ENCODE measurements at regions of chr7 and their contacts with region 1.

Region 1: GRCh38 chr7:77989981-77990566 is 191.5 kb downstream of the PHTF2 start:
- DNase-seq: no peak
- ATAC-seq: no peak
- H3K4me3 ChIP-seq: no peak overlapping the region
- H3K27ac ChIP-seq: no peak overlapping the region
- H3K4me1 ChIP-seq: no peaks in the 10 kb centered on the region
- H3K27me3 ChIP-seq: peaks cover 0 to 2% of the 10 kb centered on the region in 2 experiments; a peak in 2 of 4 replicates
- CTCF ChIP-seq: peak; percentile 4 to 37 (median 21); a peak in 2 of 6 replicates
- EP300 ChIP-seq: no peak
- POLR2A ChIP-seq: no peak
- RAD21 ChIP-seq: 0 out of 2 replicates have a peak, but pooled peaks have one; percentile 2

Region 2: DNA sequence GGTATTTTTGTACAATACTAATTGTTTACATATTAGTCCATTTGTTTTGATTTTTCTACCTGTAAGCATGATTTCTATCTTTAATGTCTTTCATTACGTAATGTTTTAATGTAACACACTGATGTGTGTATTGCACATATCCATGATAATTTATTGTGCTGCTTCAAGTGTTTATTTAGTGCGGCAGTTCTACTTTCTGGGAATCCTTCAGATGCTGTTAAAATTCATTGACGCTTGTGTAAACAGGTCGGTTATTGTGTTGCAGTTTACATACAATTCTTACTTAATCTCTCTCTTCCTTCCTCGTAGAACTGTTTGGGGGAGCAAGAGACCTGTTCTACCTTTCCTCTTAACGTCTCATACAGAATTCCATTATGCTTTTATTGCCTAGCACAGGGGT is 198.7 kb before region 1 on chr7:
- CTCF ChIA-PET with region 1: no interaction called
- POLR2A ChIA-PET with region 1: no interaction called
- RAD21 ChIA-PET with region 1: no interaction called
- SMC1A ChIA-PET with region 1: no interaction called
- in situ Hi-C with region 1: no loop called
- intact Hi-C with region 1: no loop called
- DNase-seq: no peak
- ATAC-seq: no peak
- H3K4me3 ChIP-seq: no peak overlapping the region
- H3K27ac ChIP-seq: no peak overlapping the region
- H3K4me1 ChIP-seq: no peaks in the 10 kb centered on the region; the same call in 1 of the 2 replicates
- H3K27me3 ChIP-seq: no peaks in the 10 kb centered on the region
- CTCF ChIP-seq: no peak
- EP300 ChIP-seq: no peak
- POLR2A ChIP-seq: no peak
- RAD21 ChIP-seq: no peak

Region 3: DNA sequence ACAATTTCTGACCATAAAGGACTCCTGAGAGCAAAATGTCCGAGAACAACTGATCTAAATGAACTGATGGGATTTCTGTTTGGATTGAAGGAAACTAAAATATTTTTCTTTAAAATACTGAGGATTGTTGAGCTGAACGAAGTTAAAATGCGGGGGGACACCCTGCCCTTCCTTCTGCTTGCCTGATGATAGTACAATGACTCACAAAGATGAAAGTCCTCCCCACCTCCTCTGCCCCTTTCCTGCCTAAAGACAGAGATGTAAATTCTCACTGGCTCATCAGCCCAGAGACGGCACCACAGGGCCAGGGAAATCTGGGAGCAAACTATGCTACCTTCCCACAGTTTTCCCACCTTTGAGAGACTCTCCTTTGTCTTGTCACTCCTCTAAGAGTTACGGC is 10.9 kb before region 1 on chr7:
- CTCF ChIA-PET with region 1: interaction called, 11 read pairs
- POLR2A ChIA-PET with region 1: no interaction called
- RAD21 ChIA-PET with region 1: no interaction called
- SMC1A ChIA-PET with region 1: no interaction called
- in situ Hi-C with region 1: no loop called
- intact Hi-C with region 1: no loop called
- DNase-seq: no peak
- ATAC-seq: no peak
- H3K4me3 ChIP-seq: no peak overlapping the region
- H3K27ac ChIP-seq: no peak overlapping the region
- H3K4me1 ChIP-seq: no peaks in the 10 kb centered on the region
- H3K27me3 ChIP-seq: no peaks in the 10 kb centered on the region
- CTCF ChIP-seq: no peak
- EP300 ChIP-seq: no peak
- POLR2A ChIP-seq: no peak
- RAD21 ChIP-seq: no peak

Region 4: DNA sequence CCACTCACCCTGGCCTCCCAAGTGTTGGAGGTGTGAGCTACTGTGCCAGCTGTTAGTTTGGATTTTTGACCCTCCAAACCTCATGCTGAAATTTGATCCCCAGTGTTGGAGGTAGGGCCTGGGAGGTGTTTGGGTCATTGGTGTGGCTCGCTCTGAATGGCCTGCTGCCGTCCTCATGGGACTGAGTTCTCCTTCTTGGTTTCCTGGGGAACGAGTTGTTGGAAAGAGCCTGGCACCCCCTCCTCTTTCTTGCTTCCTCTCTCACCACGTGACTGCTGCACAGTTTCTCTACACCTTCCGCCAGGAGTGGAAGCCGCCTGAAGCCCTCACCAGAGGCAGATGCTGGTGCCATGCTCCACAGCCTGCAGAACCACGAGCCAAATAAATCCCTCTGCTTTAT is 62.0 kb after region 1 on chr7:
- CTCF ChIA-PET with region 1: no interaction called
- POLR2A ChIA-PET with region 1: no interaction called
- RAD21 ChIA-PET with region 1: no interaction called
- SMC1A ChIA-PET with region 1: no interaction called
- in situ Hi-C with region 1: no loop called
- intact Hi-C with region 1: no loop called
- DNase-seq: no peak
- ATAC-seq: no peak
- H3K4me3 ChIP-seq: no peak overlapping the region
- H3K27ac ChIP-seq: no peak overlapping the region
- H3K4me1 ChIP-seq: no peaks in the 10 kb centered on the region
- H3K27me3 ChIP-seq: no peaks in the 10 kb centered on the region; a peak in 1 of 4 replicates
- CTCF ChIP-seq: no peak
- EP300 ChIP-seq: no peak
- POLR2A ChIP-seq: no peak
- RAD21 ChIP-seq: no peak

Region 5: GRCh38 chr7:78164459-78164858 is 174.4 kb after region 1 on chr7:
- CTCF ChIA-PET with region 1: no interaction called
- POLR2A ChIA-PET with region 1: no interaction called
- RAD21 ChIA-PET with region 1: no interaction called
- SMC1A ChIA-PET with region 1: no interaction called
- in situ Hi-C with region 1: no loop called
- intact Hi-C with region 1: no loop called
- DNase-seq: no peak
- ATAC-seq: no peak
- H3K4me3 ChIP-seq: no peak overlapping the region
- H3K27ac ChIP-seq: no peak overlapping the region
- H3K4me1 ChIP-seq: no peaks in the 10 kb centered on the region
- H3K27me3 ChIP-seq: no peaks in the 10 kb centered on the region; a peak in 1 of 4 replicates
- CTCF ChIP-seq: no peak
- EP300 ChIP-seq: no peak
- POLR2A ChIP-seq: no peak
- RAD21 ChIP-seq: no peak

Measured in GM12878 (cell line).